PC-9 (cell line): ENCODE measurements at regions of chr5 and their contacts with region 1.

Region 1: DNA sequence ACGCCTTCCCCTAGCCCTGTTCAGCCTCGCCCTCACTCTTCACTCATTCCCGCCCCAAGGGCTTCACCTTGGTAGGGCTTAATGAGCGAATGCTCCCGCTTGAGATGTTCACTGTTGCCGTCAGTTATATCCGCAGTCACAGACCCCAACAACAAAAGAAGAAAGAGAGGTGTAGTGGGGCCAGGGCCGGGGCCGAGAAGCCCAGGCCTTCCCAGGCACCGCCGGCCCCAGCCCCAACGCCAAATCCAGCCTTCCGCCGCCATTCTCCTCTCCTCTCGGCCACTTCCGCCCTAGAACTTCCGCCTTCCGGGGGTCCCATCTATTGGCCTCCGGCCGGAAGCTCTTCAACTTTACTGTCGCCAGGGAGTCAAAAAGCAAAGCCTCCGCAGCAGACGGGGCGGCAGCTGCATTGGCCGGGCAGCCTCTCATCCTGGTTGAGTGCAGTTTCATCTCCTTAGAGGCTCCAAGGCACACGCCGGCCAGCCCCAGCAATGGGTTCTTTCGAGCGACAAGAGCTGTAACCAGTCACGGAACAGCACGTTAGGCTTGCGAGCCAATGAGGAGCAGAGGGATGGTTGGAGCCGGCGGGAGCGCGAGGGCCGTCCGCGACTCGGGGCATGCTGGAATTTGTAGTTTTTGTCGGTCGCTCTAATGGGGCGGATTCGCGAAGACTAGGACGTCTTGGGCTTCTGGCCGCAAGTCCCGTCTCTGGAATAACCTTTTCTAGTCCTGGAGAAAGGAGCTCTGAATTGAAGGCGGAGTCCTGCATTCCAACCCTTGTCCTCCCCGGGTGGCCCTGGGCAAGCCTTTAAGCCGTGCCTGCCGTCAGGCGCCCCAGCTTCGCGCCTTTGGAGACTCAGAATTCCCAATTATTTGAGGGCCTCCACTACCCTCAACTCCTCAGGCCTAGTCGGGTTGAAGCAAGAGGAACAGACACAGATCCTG is at the start of gene LMAN2:
- DNase-seq: peak; percentile 88 to 92
- H3K4me3 ChIP-seq: peak within 1 kb of the TSS; percentile 78
- H3K27ac ChIP-seq: peak within 1 kb of the TSS; percentile 85
- H3K4me1 ChIP-seq: peaks cover 20% of the 10 kb centered on the region
- H3K27me3 ChIP-seq: no peaks in the 10 kb centered on the region
- CTCF ChIP-seq: no peak
- total RNA-seq, gene LMAN2: 129 and 153 TPM in 2 replicates

Region 2: DNA sequence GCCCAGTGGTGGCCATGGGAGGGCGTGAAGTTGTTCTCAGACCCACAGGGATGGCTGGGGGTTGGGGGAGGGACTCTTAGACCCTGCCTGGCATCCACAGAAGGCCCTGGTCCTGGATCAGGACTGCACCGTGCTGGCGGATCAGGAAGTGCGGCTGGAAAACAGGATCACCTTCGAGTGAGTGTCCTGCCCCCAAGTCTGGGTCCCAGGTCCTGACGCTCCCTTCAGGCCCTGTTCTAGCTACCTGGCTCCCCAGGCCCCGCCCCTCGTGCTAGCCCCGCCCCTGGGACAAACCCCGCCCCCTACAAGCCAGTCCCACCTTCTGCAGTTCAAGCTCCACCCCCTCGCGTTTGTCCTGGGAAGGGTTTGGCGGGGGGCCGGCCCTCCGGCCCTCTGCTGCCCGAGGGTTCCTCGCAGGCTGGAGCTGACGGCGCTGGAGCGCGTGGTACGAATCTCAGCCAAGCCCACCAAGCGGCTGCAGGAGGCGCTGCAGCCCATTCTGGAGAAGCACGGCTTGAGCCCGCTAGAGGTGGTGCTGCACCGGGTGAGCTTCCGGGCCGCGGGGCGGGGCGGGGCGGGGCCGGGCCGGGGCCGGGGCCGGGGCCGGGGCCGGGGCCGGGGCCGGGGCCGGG is 18.9 kb after region 1 on chr5:
- CTCF ChIA-PET with region 1: interaction called, 12 read pairs
- POLR2A ChIA-PET with region 1: no interaction called
- intact Hi-C with region 1: no loop called
- DNase-seq: peak; percentile 86 to 95
- H3K4me3 ChIP-seq: peak overlapping the region; percentile 54; the same call in 1 of the 2 replicates
- H3K27ac ChIP-seq: no peak overlapping the region
- H3K4me1 ChIP-seq: peaks cover 11% of the 10 kb centered on the region
- H3K27me3 ChIP-seq: no peaks in the 10 kb centered on the region
- CTCF ChIP-seq: peak; percentile 66

Region 3: GRCh38 chr5:178174456-178174855 is 822.8 kb after region 1 on chr5:
- CTCF ChIA-PET with region 1: no interaction called
- POLR2A ChIA-PET with region 1: interaction called, 12 read pairs
- intact Hi-C with region 1: no loop called
- DNase-seq: no peak
- H3K4me3 ChIP-seq: no peak overlapping the region
- H3K27ac ChIP-seq: no peak overlapping the region
- H3K4me1 ChIP-seq: no peaks in the 10 kb centered on the region
- H3K27me3 ChIP-seq: peaks cover 4% of the 10 kb centered on the region; the same call in 1 of the 2 replicates
- CTCF ChIP-seq: no peak